GM12878 (cell line): ENCODE measurements at regions of chr3 and their contacts with region 1.

Region 1: GRCh38 chr3:141360888-141361598 is 7.3 kb upstream of the ZBTB38 start:
- DNase-seq: no peak
- ATAC-seq: peak; percentile 87
- H3K4me3 ChIP-seq: peak overlapping the region; percentile 51; the same call in 1 of the 2 replicates
- H3K27ac ChIP-seq: peak overlapping the region; percentile 59
- H3K4me1 ChIP-seq: peaks cover 10% of the 10 kb centered on the region
- H3K27me3 ChIP-seq: no peaks in the 10 kb centered on the region
- CTCF ChIP-seq: peak; percentile 79 to 90 (median 82)
- EP300 ChIP-seq: no peak
- POLR2A ChIP-seq: no peak
- RAD21 ChIP-seq: peak; percentile 98

Region 2: DNA sequence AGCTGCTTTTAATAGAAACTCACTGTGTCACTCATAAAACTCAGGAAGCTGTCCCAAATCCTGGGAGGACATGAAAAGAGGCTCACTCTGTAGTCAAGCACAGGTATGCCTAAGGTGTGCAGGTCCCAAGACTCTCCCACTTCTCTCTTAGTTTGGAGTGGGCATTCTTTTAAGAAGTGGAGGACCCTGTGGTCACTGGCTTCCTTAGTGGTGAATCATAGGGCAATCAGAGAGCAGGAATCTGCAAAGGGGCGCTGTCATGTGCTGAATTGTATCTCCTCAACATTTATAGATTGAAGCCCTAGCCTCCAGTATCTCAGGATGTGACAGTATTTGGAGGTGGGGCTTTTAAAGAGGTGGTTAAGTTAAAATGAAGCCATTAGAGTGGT is 39.9 kb before region 1 on chr3:
- CTCF ChIA-PET with region 1: interaction called, 155 read pairs
- POLR2A ChIA-PET with region 1: no interaction called
- RAD21 ChIA-PET with region 1: interaction called, 119 read pairs
- SMC1A ChIA-PET with region 1: interaction called, 31 read pairs
- in situ Hi-C with region 1: no loop called
- intact Hi-C with region 1: no loop called
- DNase-seq: no peak
- ATAC-seq: no peak
- H3K4me3 ChIP-seq: no peak overlapping the region
- H3K27ac ChIP-seq: no peak overlapping the region
- H3K4me1 ChIP-seq: peaks cover 9% of the 10 kb centered on the region; the same call in 1 of the 2 replicates
- H3K27me3 ChIP-seq: no peaks in the 10 kb centered on the region
- CTCF ChIP-seq: no peak
- EP300 ChIP-seq: no peak
- POLR2A ChIP-seq: no peak
- RAD21 ChIP-seq: no peak

Region 3: DNA sequence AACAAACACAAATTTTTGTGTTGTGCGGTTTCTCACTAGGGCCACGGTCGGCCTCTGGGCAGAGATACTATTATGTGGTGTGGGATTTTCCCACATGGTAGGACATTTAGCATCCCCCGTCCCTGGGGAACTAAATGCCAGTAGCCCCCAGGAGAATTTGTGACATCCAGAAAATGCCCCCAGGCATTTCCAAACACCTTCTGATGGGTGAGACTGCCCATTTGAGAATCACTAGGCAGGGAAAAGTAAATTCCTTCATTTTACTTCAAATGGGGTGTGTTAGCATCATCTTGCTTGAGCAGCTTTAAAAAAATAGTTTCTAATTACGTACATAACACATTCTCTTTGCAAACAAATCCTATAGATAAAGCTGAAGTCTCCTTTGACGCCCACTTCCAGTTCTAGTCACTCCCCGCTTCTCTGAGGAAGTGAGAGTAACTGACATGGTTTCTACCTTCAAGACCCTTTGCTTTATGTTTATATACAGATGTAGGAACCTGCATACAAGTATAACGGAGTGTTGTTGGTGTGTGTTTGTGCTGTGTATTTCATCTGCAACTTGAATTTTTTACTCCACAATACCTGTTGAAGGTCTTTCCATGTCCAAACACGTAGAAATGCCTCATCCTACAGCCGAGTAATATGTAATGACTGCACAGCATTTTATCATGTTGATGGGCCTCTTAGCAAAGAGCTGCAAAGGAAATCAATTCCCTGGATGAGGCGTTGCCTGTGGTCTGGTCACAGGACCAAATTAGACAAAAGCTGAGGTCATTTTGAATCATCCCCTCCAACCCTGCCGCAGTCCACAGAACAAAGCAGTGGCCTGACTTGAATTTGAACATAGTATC is 24.1 kb before region 1 on chr3:
- CTCF ChIA-PET with region 1: interaction called, 32 read pairs
- POLR2A ChIA-PET with region 1: interaction called, 12 read pairs
- RAD21 ChIA-PET with region 1: interaction called, 30 read pairs
- SMC1A ChIA-PET with region 1: interaction called, 67 read pairs
- in situ Hi-C with region 1: no loop called
- intact Hi-C with region 1: no loop called
- DNase-seq: peak; percentile 95
- ATAC-seq: peak; percentile 90
- H3K4me3 ChIP-seq: peak overlapping the region; percentile 33
- H3K27ac ChIP-seq: peak overlapping the region; percentile 95
- H3K4me1 ChIP-seq: peaks cover 45% of the 10 kb centered on the region
- H3K27me3 ChIP-seq: no peaks in the 10 kb centered on the region
- CTCF ChIP-seq: no peak
- EP300 ChIP-seq: peak; percentile 27 to 98; a peak in 3 of 4 replicates
- POLR2A ChIP-seq: no peak
- RAD21 ChIP-seq: 0 out of 2 replicates have a peak, but pooled peaks have one; percentile 12

Region 4: GRCh38 chr3:141386611-141387111 is 25.6 kb after region 1 on chr3:
- CTCF ChIA-PET with region 1: interaction called, 26 read pairs
- POLR2A ChIA-PET with region 1: interaction called, 9 read pairs
- RAD21 ChIA-PET with region 1: interaction called, 89 read pairs
- SMC1A ChIA-PET with region 1: interaction called, 47 read pairs
- in situ Hi-C with region 1: no loop called
- intact Hi-C with region 1: no loop called
- DNase-seq: no peak
- ATAC-seq: peak; percentile 58
- H3K4me3 ChIP-seq: peak overlapping the region; percentile 67
- H3K27ac ChIP-seq: peak overlapping the region; percentile 94
- H3K4me1 ChIP-seq: peaks cover 30% of the 10 kb centered on the region
- H3K27me3 ChIP-seq: no peaks in the 10 kb centered on the region
- CTCF ChIP-seq: no peak
- EP300 ChIP-seq: no peak
- POLR2A ChIP-seq: peak; percentile 93
- RAD21 ChIP-seq: no peak

Region 5: GRCh38 chr3:141419921-141420320 is 58.9 kb after region 1 on chr3:
- CTCF ChIA-PET with region 1: interaction called, 11 read pairs
- POLR2A ChIA-PET with region 1: no interaction called
- RAD21 ChIA-PET with region 1: interaction called, 10 read pairs
- SMC1A ChIA-PET with region 1: interaction called, 32 read pairs
- in situ Hi-C with region 1: no loop called
- intact Hi-C with region 1: no loop called
- DNase-seq: no peak
- ATAC-seq: no peak
- H3K4me3 ChIP-seq: no peak overlapping the region
- H3K27ac ChIP-seq: no peak overlapping the region
- H3K4me1 ChIP-seq: no peaks in the 10 kb centered on the region
- H3K27me3 ChIP-seq: no peaks in the 10 kb centered on the region
- CTCF ChIP-seq: no peak
- EP300 ChIP-seq: no peak
- POLR2A ChIP-seq: no peak
- RAD21 ChIP-seq: no peak

Region 6: DNA sequence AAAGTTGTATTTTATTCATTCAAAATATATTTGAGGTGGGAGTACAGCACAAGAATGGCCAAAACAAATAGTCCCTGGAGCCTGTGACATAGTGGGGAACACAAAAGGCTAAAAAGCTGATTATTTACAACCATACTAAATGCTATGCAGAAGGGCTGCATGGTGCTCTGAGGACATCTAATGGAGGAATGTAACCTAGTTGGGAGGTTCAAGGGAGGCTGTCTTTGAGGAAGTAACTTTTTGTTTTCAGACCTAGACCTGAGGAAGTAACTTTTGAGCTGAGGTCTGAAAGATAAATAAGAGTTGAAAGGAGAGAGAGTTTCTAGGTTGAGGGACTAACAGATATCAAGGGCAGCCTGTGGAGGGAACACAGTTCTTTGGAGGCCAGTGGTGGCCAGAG is 91.0 kb after region 1 on chr3:
- CTCF ChIA-PET with region 1: interaction called, 288 read pairs
- POLR2A ChIA-PET with region 1: interaction called, 17 read pairs
- RAD21 ChIA-PET with region 1: interaction called, 148 read pairs
- SMC1A ChIA-PET with region 1: interaction called, 242 read pairs
- in situ Hi-C with region 1: no loop called
- intact Hi-C with region 1: loop called (anchors 1 kb)
- DNase-seq: peak; percentile 80
- ATAC-seq: peak; percentile 90
- H3K4me3 ChIP-seq: no peak overlapping the region
- H3K27ac ChIP-seq: no peak overlapping the region
- H3K4me1 ChIP-seq: no peaks in the 10 kb centered on the region; the same call in 1 of the 2 replicates
- H3K27me3 ChIP-seq: no peaks in the 10 kb centered on the region
- CTCF ChIP-seq: peak; percentile 75 to 95 (median 89)
- EP300 ChIP-seq: no peak
- POLR2A ChIP-seq: no peak
- RAD21 ChIP-seq: peak; percentile 100